CD4-positive, alpha-beta T cell (primary cell): ENCODE measurements at regions of chr7 and their contacts with region 1.

Region 1: DNA sequence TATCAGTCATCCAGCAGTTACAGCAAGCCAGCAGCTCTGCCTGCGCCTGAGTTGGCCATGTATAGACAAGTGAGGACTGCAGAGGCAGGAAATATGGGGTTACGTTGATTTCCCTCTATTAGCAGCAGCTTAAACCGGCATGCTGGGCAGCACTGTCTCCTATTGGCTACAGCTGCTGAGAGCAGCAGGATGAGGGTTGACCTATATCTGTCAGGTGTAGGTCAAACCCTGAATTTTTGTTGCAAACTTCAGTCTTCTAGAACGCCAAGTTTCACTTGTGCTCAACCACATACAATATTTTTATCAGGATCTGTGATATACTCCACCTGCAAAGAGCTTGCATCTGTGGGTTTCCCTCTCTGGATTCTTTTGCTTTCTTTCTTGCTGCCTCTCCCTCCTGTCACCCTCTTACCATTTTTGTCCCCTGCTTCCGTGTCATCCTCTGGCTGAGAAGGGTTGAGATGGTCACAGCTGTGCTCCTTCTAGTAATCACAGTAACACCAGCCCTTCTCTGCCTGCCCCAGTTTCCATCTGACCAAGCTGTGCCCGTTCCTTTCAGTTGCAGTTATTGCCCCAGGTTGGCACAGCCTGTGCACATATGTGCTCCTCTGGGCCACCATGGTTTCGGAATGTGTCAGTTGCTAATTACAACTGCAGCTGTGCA is 23.8 kb upstream of the GLCCI1 start:
- DNase-seq: peak; percentile 14 to 87 (median 32)
- ATAC-seq: peak; percentile 93
- H3K4me3 ChIP-seq: peak overlapping the region; percentile 45
- H3K4me3 Mint-ChIP-seq: peak overlapping the region; percentile 60
- H3K27ac ChIP-seq: peak overlapping the region; percentile 30 to 69
- H3K27ac Mint-ChIP-seq: peak overlapping the region; percentile 77
- H3K4me1 ChIP-seq: peaks cover 23% of the 10 kb centered on the region
- H3K4me1 Mint-ChIP-seq: peaks cover 30% of the 10 kb centered on the region
- H3K27me3 ChIP-seq: no peaks in the 10 kb centered on the region
- H3K27me3 Mint-ChIP-seq: no peaks in the 10 kb centered on the region
- CTCF ChIP-seq: no peak

Region 2: DNA sequence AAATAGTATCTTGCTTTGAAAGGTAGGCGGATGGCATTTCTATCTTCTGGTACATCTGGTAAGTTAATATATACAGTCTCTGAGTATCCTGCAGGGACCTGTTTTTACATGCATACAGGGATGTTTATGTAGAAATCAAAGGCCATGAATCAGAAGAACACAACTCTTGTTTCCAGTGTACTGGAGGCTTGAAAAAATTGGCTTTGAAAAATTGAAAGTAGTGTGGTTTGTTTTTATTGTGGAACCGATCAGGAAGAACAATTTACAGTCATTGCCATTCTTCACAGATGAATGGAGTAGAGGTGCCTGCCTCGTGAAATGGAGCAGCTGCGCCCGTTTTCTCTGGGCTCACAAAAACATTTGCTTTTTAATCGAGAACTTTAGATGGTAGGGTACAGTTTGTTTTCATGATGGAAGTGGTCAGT is 172.3 kb before region 1 on chr7:
- CTCF ChIA-PET with region 1: no interaction called
- POLR2A ChIA-PET with region 1: no interaction called
- intact Hi-C with region 1: no loop called
- DNase-seq: peak in 1 of 14 experiments; percentile 7
- ATAC-seq: peak; percentile 52
- H3K4me3 ChIP-seq: peak overlapping the region; percentile 1
- H3K4me3 Mint-ChIP-seq: peak overlapping the region; percentile 85
- H3K27ac ChIP-seq: no peak overlapping the region
- H3K27ac Mint-ChIP-seq: peak overlapping the region; percentile 45
- H3K4me1 ChIP-seq: peaks cover 3% of the 10 kb centered on the region
- H3K4me1 Mint-ChIP-seq: peaks cover 44% of the 10 kb centered on the region
- H3K27me3 ChIP-seq: no peaks in the 10 kb centered on the region
- H3K27me3 Mint-ChIP-seq: no peaks in the 10 kb centered on the region
- CTCF ChIP-seq: no peak

Region 3: DNA sequence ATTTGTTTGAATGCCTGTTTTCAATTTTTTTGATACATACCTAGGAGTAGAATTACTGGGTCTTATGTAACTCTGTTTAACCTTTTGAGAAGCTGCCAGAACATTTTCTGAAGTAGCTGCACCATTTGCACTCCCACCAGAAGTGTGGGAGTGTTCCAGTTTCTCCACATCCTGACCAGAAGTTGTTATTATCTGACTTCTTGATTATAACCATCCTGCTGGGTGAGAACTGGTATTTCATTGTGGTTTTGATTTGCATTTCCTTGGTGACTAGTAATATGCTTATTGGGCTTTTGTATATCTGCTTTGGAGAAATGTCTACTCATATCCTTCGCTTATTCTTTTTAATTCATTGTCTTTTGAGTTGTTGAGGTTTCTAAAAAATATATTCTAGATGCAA is 93.4 kb before region 1 on chr7:
- CTCF ChIA-PET with region 1: no interaction called
- POLR2A ChIA-PET with region 1: no interaction called
- intact Hi-C with region 1: loop called in 1 of 2 experiments (anchors 5 kb)
- DNase-seq: peak in 1 of 14 experiments; percentile 33
- ATAC-seq: no peak
- H3K4me3 ChIP-seq: no peak overlapping the region
- H3K4me3 Mint-ChIP-seq: no peak overlapping the region
- H3K27ac ChIP-seq: no peak overlapping the region
- H3K27ac Mint-ChIP-seq: no peak overlapping the region
- H3K4me1 ChIP-seq: no peaks in the 10 kb centered on the region
- H3K4me1 Mint-ChIP-seq: peaks cover 39% of the 10 kb centered on the region
- H3K27me3 ChIP-seq: no peaks in the 10 kb centered on the region
- H3K27me3 Mint-ChIP-seq: no peaks in the 10 kb centered on the region
- CTCF ChIP-seq: no peak

Region 4: DNA sequence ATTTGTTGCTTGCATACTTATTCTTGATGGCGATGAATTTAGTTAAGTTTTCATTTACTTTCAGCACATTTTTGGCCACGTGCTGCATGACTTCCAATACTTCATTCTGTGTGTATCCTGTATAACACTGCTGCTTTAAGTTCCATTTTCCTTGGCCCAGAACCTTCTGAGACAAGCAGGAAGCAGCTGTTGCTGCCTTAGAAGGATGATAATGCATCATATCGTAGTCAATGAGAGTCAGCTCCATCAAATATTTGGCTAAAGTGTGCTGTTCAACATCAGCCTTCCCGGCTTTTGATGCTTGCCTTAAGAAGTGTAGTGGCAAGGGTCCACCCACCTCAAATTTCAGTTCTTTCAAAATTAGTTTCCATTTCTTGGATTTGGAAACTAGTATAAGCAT is 35.4 kb before region 1 on chr7:
- CTCF ChIA-PET with region 1: no interaction called
- POLR2A ChIA-PET with region 1: no interaction called
- intact Hi-C with region 1: no loop called
- DNase-seq: no peak
- ATAC-seq: no peak
- H3K4me3 ChIP-seq: no peak overlapping the region
- H3K4me3 Mint-ChIP-seq: no peak overlapping the region
- H3K27ac ChIP-seq: no peak overlapping the region
- H3K27ac Mint-ChIP-seq: no peak overlapping the region
- H3K4me1 ChIP-seq: no peaks in the 10 kb centered on the region
- H3K4me1 Mint-ChIP-seq: no peaks in the 10 kb centered on the region
- H3K27me3 ChIP-seq: no peaks in the 10 kb centered on the region
- H3K27me3 Mint-ChIP-seq: no peaks in the 10 kb centered on the region
- CTCF ChIP-seq: no peak

Region 5: DNA sequence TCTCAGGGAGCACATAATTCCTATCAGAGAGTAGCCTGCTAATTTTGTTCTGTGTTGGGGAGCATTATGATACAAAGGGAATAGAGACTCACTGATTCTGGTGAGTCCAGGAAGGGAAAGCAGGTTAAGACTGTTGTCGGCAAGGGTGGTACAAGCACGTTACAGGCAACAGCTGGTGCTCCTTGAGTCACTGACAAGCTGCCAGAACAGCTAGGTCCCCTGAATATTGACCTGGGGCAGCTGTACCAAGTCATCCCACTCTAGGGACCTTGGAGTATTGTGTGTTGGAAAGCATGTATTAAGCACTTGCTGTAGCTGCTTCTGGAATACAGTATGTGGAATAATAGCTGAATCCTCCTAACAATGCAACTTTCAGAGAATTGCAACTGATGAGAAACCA is 13.1 kb before region 1 on chr7:
- CTCF ChIA-PET with region 1: interaction called, 4 read pairs
- POLR2A ChIA-PET with region 1: interaction called, 10 read pairs
- intact Hi-C with region 1: no loop called
- DNase-seq: no peak
- ATAC-seq: no peak
- H3K4me3 ChIP-seq: no peak overlapping the region
- H3K4me3 Mint-ChIP-seq: no peak overlapping the region
- H3K27ac ChIP-seq: no peak overlapping the region
- H3K27ac Mint-ChIP-seq: no peak overlapping the region
- H3K4me1 ChIP-seq: no peaks in the 10 kb centered on the region
- H3K4me1 Mint-ChIP-seq: no peaks in the 10 kb centered on the region
- H3K27me3 ChIP-seq: no peaks in the 10 kb centered on the region
- H3K27me3 Mint-ChIP-seq: no peaks in the 10 kb centered on the region
- CTCF ChIP-seq: no peak

Region 6: GRCh38 chr7:8035647-8036518 is 91.1 kb after region 1 on chr7:
- CTCF ChIA-PET with region 1: no interaction called
- POLR2A ChIA-PET with region 1: no interaction called
- intact Hi-C with region 1: no loop called
- DNase-seq: peak in 3 of 14 experiments; percentile 62 to 65 (median 64)
- ATAC-seq: peak; percentile 85
- H3K4me3 ChIP-seq: no peak overlapping the region
- H3K4me3 Mint-ChIP-seq: no peak overlapping the region
- H3K27ac ChIP-seq: no peak overlapping the region
- H3K27ac Mint-ChIP-seq: peak overlapping the region; percentile 69
- H3K4me1 ChIP-seq: peaks cover 19% of the 10 kb centered on the region
- H3K4me1 Mint-ChIP-seq: peaks cover 39% of the 10 kb centered on the region
- H3K27me3 ChIP-seq: no peaks in the 10 kb centered on the region
- H3K27me3 Mint-ChIP-seq: no peaks in the 10 kb centered on the region
- CTCF ChIP-seq: peak; percentile 65

Region 7: DNA sequence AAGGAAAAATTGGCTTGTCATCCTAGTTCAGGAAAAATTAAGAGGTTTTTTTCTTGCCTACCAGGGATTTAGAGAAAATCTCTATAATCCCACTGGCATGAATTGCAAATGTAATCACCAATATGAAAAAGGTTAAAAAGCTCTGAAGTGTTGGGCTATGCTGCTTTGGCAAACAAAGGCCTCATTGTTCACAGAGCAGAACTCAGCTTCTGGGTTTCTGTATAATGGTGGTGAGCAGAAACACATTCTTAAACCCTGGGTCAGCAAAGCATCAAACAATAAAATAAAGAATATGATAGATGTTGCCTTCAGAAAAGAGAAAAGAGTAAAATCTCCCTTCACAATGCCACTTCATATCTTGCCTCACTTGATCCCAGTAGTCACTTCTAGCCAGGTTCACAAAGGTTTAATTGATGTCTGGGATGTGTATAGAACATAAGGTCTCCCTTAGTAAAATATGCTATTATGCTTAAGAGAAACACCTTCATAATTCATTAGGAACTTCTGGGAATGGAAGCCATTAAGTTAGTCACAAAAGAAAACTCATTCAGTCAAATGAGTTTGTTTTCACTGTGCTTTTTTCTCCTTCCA is 1773.4 kb after region 1 on chr7:
- CTCF ChIA-PET with region 1: no interaction called
- POLR2A ChIA-PET with region 1: no interaction called
- intact Hi-C with region 1: no loop called
- DNase-seq: no peak
- ATAC-seq: no peak
- H3K4me3 ChIP-seq: no peak overlapping the region
- H3K4me3 Mint-ChIP-seq: no peak overlapping the region
- H3K27ac ChIP-seq: no peak overlapping the region
- H3K27ac Mint-ChIP-seq: no peak overlapping the region
- H3K4me1 ChIP-seq: no peaks in the 10 kb centered on the region
- H3K4me1 Mint-ChIP-seq: no peaks in the 10 kb centered on the region
- H3K27me3 ChIP-seq: no peaks in the 10 kb centered on the region
- H3K27me3 Mint-ChIP-seq: no peaks in the 10 kb centered on the region
- CTCF ChIP-seq: no peak